ENCODE measurements at regions of chr9 and their contacts with region 1.

Region 1: GRCh38 chr9:27529316-27530278 is at the start of gene MOB3B:
- DNase-seq: no peak
- H3K4me3 ChIP-seq: peak within 1 kb of the TSS; percentile 39
- H3K27me3 ChIP-seq: peaks cover 18% of the 10 kb centered on the region
- CTCF ChIP-seq: peak; percentile 77
- polyA plus RNA-seq, gene MOB3B: 0.04 and 0.05 TPM in 2 replicates

Region 2: GRCh38 chr9:27333241-27334052 is 196.2 kb before region 1 on chr9:
- CTCF ChIA-PET with region 1: interaction called, 21 read pairs
- POLR2A ChIA-PET with region 1: no interaction called
- DNase-seq: peak; percentile 21
- H3K4me3 ChIP-seq: no peak overlapping the region
- H3K27me3 ChIP-seq: peaks cover 1% of the 10 kb centered on the region
- CTCF ChIP-seq: peak; percentile 78

Region 3: DNA sequence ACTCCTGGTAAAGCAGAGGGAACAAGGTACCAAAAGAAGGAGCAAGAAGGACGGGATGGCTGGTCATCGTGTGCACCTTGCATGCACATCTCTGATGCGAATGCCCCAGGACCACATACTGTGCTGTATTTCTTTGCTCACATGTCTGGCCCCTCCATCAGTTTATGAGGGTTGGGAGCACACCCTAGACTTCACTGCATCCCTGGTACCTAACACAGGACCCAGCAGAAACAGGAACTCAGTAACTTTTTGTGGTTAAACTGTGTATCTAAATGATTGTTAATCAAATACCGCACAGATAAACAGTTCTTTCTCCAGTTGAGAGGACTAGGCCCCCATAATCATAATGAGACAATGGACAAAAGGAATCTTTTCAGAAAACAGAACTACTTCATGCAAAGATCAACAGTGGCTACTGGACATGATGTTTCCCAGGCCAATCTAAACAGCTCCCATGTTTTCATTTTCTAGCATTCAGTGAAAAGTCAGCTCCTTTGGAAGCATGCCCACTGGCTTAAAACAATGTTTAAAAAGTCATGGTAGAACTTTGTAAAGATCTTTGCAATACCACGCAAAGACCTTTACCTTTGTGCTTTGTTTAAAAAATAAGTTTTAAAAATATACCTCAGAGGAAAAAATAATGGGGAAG is 61.0 kb before region 1 on chr9:
- CTCF ChIA-PET with region 1: no interaction called
- POLR2A ChIA-PET with region 1: no interaction called
- DNase-seq: no peak
- H3K4me3 ChIP-seq: no peak overlapping the region
- H3K27me3 ChIP-seq: no peaks in the 10 kb centered on the region
- CTCF ChIP-seq: no peak

Region 4: DNA sequence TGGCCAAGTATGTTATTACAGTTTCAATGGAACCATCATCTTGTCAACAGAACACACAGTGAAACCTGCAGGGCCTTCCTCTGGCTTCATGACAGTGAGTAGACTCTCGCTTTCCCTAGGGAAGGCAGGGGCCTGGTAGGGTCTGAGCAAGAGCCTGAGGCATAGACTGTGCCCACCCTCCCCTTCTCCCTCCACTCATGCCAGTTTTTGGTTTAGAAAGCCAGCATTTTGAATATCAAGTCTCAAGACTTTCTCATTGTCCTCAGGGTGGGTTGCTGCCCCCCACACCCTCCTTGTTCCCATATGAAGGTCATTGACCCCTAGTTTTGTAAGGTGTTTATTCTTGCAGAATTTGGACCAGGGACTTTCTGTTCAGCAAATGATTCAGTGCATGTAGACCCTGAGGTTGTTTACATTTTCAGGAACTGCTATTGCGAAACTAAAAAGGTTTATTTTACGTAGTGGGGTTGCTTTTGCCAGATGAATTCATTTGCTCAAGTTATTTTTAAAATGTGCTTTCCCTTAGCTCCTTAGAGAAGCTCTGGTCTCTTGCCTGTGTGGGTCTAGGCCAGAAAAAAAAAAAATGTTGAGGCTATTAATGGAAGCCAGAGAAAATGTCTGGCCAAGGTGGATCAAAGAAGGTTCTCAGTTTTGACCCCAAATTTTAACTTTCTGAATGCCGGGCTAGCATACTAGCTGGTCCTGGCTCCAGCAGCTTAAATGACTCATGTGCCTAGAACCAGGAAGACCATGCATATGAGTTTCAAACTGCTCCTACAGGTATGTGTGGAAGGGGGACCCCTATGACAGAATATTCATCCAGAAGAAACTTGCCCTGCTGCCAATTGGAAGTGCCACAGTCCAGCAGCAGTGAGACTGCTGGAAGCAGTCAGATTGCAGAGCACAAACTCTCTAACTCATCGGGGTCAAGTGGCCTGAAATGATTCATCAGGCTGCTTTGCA is 10.2 kb after region 1 on chr9:
- CTCF ChIA-PET with region 1: interaction called, 30 read pairs
- POLR2A ChIA-PET with region 1: no interaction called
- DNase-seq: peak; percentile 59
- H3K4me3 ChIP-seq: no peak overlapping the region
- H3K27me3 ChIP-seq: no peaks in the 10 kb centered on the region
- CTCF ChIP-seq: no peak

Region 5: GRCh38 chr9:27548055-27548741 is 18.6 kb after region 1 on chr9:
- CTCF ChIA-PET with region 1: interaction called, 21 read pairs
- POLR2A ChIA-PET with region 1: no interaction called
- DNase-seq: no peak
- H3K4me3 ChIP-seq: no peak overlapping the region
- H3K27me3 ChIP-seq: no peaks in the 10 kb centered on the region
- CTCF ChIP-seq: peak; percentile 48